Cardiac septum (tissue), 1 donor: ENCODE measurements at regions of chr18 and their contacts with region 1.

Region 1: GRCh38 chr18:50194631-50195532 is at the start of gene MYO5B:
- DNase-seq: no peak
- total RNA-seq, gene MYO5B: 5.2 TPM

Region 2: GRCh38 chr18:49486953-49487710 is 707.8 kb before region 1 on chr18 and contains the start of gene C18orf32:
- intact Hi-C with region 1: no loop called
- DNase-seq: peak; percentile 98
- total RNA-seq, gene C18orf32: 65.2 TPM

Region 3: DNA sequence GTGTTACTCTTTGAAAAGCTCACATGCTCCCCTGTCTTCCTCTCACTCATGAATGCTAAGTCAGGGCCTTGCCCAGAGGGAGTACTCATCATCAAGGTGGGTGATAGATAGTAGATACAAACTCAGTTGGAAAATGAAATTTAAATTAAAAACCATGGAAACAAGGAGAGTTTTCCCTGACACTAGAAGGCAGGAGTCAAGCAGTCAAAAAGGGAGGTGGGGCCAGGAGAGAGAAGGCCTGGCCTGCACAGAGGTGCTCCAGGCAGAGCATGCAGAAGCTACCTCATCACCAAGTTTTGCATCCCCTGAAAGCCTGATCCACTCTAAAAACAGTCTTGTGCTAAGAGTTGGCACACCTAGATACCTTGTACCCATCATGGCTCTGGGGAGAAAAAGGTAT is 143.6 kb before region 1 on chr18:
- intact Hi-C with region 1: loop called (anchors 10 kb)
- DNase-seq: no peak

Region 4: DNA sequence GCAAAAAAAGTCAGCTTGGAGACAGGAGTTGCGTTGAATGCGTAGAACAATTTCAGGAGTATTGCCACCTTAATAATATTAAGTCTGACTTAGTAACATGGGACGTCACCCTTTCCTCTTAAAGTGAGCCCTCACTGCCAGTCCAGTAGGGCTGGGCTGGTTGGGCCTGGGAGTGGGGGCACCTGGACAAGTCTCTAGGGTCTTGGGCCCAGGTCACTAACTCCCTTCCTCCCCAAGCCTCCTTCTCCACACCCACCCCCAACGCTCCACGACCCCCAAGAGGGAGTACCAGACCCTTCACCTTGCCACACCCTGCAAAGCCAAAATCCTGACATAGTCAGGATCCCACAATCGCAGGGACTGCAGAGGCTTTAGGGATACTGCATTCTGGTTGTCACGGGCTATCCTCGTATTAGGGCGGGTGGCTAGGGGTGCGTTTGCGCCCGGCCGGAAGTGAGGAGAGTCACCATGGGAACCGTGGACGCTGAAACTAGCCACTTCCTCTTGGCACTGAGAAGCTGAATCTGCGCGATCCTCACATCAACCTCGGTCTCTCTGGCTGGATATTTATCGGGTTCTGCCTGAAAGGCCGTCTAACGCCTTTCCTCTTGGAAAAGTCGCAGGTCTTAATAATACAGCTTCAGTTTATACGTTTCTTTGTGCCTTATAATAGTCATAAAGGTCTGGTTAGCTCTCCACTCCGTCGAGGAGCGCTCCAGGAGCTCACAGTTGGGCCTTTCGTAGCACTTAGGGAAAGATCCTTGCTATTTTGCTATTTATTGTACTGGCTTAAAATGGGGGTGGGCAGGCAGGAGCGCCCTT is 103.0 kb after region 1 on chr18:
- intact Hi-C with region 1: no loop called
- DNase-seq: peak; percentile 88

Region 5: DNA sequence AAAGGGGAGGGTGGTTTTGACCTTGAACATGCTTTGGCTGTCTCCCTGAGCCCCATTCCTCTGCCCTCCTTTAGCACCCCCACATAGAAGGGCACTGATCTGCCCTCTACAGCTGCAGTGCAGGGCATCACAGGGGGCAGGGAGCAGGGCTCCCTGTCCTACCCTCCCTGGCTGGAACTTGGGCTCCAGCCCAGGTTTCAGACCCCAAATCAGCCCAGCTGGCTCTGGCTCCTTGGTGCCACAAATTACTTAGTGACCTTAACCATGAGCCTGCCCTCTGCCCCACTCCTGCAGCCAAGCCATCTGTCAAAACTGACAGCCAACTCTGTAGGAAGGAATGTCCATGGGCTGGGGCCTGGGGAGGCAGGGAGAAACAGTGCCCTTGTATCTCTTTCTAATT is 470.6 kb after region 1 on chr18:
- intact Hi-C with region 1: no loop called
- DNase-seq: peak; percentile 84